ENCODE measurements at regions of chr4 and their contacts with region 1.

Region 1: DNA sequence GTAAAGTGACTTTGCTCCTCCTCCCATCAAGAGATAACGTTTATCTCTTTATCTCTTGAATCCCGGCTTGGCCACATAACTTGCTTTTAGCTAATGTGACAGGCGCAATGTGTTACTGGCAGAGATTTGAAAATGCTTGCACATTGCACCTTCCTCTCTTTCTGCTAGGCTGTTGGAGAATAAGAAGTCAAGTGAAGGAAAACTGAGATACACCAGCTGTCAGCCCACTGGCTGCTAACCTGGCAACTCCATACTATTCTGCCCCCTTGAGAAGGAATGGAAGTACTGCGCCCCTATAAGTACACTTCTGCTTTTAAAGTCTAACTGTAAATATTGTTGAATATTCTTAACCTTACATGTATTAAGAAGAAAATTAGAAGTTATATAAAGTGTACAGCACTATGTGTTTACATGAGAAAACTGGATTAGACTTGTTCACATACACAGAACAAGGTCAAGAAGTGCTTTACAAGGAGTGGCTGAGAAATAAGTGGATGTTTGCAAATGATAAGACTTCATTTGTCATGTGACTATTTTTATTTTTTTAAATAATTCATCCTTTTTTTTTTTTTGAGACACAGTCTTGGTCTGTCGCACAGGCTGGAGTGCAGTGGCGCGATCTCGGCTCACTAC is 424.5 kb upstream of the CTSO start:
- DNase-seq: no peak
- ATAC-seq: peak; percentile 71
- H3K4me3 ChIP-seq: no peak overlapping the region
- H3K27ac ChIP-seq: no peak overlapping the region
- H3K4me1 ChIP-seq: no peaks in the 10 kb centered on the region
- H3K27me3 ChIP-seq: no peaks in the 10 kb centered on the region
- CTCF ChIP-seq: peak; percentile 37 to 58 (median 53); a peak in 5 of 6 replicates
- EP300 ChIP-seq: no peak
- POLR2A ChIP-seq: no peak
- RAD21 ChIP-seq: peak; percentile 62

Region 2: DNA sequence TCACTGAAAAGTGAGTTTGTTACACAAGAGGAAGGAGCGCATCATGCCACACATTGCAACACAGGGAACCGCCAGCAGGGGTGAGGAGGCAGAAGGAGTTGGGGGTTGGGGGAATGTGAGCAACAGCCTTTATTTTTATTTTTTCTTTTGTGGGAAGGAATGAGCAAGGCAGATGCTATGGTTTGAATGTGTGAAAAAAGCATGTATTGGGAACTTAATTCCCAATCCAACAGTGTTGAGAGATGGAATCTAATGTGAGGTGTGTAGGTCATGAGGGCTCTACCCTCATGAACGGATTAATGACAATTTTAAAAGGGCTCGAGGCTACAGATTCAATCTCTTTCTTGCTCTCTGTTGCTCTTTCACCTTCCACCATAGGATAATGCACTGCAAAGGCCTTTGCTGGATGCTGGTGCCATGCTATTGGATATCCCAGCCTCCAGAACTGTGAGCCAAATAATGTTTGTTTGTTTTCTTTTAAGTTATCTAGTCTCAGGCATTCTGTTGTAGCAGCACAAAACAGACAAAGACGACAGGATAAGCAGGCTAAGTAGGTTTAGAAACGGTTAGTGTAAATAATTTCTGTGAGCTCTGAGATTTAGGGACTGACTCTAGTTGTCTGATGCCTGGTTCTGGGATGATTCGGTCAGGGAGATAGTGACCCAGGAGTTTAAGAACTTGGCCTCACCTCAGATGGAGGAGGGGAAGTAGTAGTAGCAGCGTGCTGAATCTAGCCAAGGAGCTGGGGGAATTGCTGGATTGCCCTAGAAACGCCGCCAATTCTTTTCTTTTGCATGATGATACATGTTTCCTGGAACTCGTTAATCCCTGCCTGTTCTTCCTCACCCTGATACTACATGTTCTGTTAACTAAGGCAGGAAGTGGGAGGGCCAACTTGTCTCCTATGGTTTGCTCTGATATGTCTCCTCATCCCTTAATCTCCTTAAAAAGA is 267.9 kb before region 1 on chr4:
- CTCF ChIA-PET with region 1: interaction called, 13 read pairs
- POLR2A ChIA-PET with region 1: no interaction called
- RAD21 ChIA-PET with region 1: interaction called, 9 read pairs
- SMC1A ChIA-PET with region 1: interaction called, 7 read pairs
- in situ Hi-C with region 1: no loop called
- intact Hi-C with region 1: loop called (anchors 1 kb)
- DNase-seq: no peak
- ATAC-seq: peak; percentile 69
- H3K4me3 ChIP-seq: no peak overlapping the region
- H3K27ac ChIP-seq: no peak overlapping the region
- H3K4me1 ChIP-seq: no peaks in the 10 kb centered on the region
- H3K27me3 ChIP-seq: no peaks in the 10 kb centered on the region
- CTCF ChIP-seq: peak in 2 of 3 experiments; percentile 23 to 40; a peak in 2 of 6 replicates
- EP300 ChIP-seq: no peak
- POLR2A ChIP-seq: no peak
- RAD21 ChIP-seq: no peak

Region 3: DNA sequence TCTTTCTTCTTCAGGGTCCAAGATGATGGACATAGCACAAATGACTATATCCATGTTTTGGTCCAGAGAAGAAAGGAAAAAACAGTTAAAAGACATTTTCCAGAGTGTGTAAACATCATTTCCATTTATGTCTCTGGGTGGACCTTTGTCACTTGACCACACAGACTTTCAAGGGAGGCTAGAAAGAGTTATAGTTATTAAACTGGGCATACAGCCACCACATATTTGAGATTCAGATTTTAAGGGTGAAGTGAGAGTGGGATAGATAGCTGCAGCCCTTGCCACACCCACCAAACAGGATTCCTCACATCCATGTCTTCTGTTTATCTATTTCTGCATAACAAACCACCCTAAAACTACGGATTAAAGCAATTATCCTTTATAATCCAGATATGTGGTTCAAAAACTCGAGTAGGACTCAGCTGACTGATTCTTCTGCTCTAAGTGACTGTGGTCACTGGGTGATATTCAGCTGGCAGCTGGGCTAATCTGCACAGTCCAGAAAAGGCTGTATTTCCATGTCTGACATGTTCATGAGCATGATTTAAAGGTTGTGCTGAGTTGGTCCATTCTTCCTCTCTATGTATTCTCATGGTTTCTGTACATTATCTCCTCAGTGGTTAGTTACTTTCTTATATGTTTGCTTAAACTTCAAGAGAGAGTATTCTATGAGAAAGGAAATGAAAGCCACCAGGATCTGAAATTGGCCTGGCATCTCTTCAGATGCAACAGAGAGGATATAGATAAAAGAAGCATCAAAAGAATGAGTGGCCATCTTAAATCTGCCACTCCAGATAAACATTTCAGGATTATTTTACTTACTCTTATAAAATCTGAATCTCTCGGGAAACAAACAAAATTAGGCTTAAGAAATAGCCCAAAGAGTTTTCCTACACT is 35.3 kb after region 1 on chr4:
- CTCF ChIA-PET with region 1: no interaction called
- POLR2A ChIA-PET with region 1: no interaction called
- RAD21 ChIA-PET with region 1: no interaction called
- SMC1A ChIA-PET with region 1: no interaction called
- in situ Hi-C with region 1: no loop called
- intact Hi-C with region 1: loop called (anchors 1 kb)
- DNase-seq: no peak
- ATAC-seq: no peak
- H3K4me3 ChIP-seq: no peak overlapping the region
- H3K27ac ChIP-seq: no peak overlapping the region
- H3K4me1 ChIP-seq: no peaks in the 10 kb centered on the region
- H3K27me3 ChIP-seq: no peaks in the 10 kb centered on the region; a peak in 1 of 4 replicates
- CTCF ChIP-seq: no peak
- EP300 ChIP-seq: no peak
- POLR2A ChIP-seq: no peak
- RAD21 ChIP-seq: no peak

Region 4: GRCh38 chr4:156439576-156440200 is 61.5 kb after region 1 on chr4:
- CTCF ChIA-PET with region 1: no interaction called
- POLR2A ChIA-PET with region 1: no interaction called
- RAD21 ChIA-PET with region 1: no interaction called
- SMC1A ChIA-PET with region 1: no interaction called
- in situ Hi-C with region 1: no loop called
- intact Hi-C with region 1: no loop called
- DNase-seq: no peak
- ATAC-seq: no peak
- H3K4me3 ChIP-seq: no peak overlapping the region
- H3K27ac ChIP-seq: no peak overlapping the region
- H3K4me1 ChIP-seq: no peaks in the 10 kb centered on the region
- H3K27me3 ChIP-seq: no peaks in the 10 kb centered on the region
- CTCF ChIP-seq: no peak
- EP300 ChIP-seq: no peak
- POLR2A ChIP-seq: no peak
- RAD21 ChIP-seq: no peak

Region 5: DNA sequence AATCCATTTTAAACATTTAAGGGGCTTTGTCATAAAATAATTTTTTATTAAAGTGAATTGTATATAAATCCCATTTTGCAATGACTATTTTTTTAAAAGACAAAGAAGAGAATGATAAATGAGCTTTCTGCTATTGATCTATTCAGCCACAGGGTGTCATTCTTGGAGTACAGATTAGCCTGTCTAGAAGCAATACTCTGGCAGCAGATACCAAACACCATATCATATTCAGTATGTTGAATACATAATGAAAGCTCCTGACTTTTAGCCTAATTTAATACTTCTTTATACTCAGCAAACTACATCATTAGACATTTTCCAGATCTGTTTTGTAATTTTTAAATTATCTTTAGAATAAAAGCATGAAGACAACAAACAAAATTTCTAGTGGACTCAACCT is 97.2 kb after region 1 on chr4:
- CTCF ChIA-PET with region 1: no interaction called
- POLR2A ChIA-PET with region 1: no interaction called
- RAD21 ChIA-PET with region 1: no interaction called
- SMC1A ChIA-PET with region 1: no interaction called
- in situ Hi-C with region 1: no loop called
- intact Hi-C with region 1: no loop called
- DNase-seq: no peak
- ATAC-seq: peak; percentile 61
- H3K4me3 ChIP-seq: no peak overlapping the region
- H3K27ac ChIP-seq: no peak overlapping the region
- H3K4me1 ChIP-seq: no peaks in the 10 kb centered on the region
- H3K27me3 ChIP-seq: no peaks in the 10 kb centered on the region
- CTCF ChIP-seq: peak in 2 of 3 experiments; percentile 13 to 34; a peak in 2 of 6 replicates
- EP300 ChIP-seq: no peak
- POLR2A ChIP-seq: no peak
- RAD21 ChIP-seq: peak; percentile 68